ENCODE measurements at regions of chr2 and their contacts with region 1.

Region 1: DNA sequence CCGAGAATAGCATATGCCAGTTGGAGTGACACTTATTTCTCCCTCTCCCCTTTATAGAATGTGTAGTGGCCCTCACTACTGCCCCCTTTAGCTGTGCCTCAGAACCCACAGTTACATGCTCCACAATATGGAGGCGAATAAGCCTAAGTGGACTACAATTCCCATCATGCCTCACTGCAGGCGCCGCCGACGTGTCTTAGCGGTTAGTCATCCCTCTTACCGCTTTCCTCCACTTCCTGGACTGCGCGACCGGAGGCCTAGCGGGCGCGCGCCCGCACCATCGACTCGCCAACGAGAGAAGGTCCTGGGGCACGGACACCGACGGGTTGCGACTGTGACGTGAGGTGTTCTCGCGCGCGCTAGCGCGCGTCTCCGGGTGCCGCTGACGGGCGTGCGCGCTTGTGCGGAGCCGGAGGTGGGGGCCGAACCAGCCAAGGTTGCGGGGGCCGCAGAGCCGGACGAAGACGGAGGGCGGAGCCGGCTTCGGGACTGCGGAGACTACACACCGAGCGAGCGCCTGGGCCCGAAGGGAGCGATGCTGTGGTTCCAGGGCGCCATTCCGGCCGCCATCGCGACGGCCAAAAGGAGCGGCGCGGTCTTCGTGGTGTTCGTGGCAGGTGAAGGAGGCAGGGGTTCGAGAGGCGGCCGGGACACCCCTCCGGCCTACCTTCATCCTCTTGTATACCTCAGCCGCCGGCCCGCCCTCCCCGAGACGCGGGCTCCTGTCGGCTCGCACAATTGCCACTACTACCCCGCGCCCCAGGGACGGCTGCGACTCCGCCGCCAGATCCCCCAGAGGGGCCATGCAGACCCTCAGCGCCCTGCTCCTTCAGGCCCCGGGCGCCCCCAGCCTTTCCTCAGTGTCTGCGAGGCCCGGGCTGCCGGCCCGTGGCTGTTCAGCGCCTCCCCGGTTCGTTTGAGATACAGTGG is at the start of gene UBXN4:
- DNase-seq: peak; percentile 86 to 97 (median 90)
- H3K4me3 ChIP-seq: peak within 1 kb of the TSS; percentile 87
- H3K4me3 Mint-ChIP-seq: peak within 1 kb of the TSS; percentile 92 to 98 (median 97)
- H3K27ac ChIP-seq: peak within 1 kb of the TSS; percentile 94
- H3K27ac Mint-ChIP-seq: peak within 1 kb of the TSS; percentile 93 to 100 (median 99)
- H3K4me1 ChIP-seq: peaks cover 39% of the 10 kb centered on the region
- H3K4me1 Mint-ChIP-seq: peaks cover 38 to 46% (median 46%) of the 10 kb centered on the region in 3 donors
- H3K27me3 ChIP-seq: no peaks in the 10 kb centered on the region
- H3K27me3 Mint-ChIP-seq: no peaks in the 10 kb centered on the region
- total RNA-seq, gene UBXN4: 85.5 to 96.9 TPM

Region 2: GRCh38 chr2:135531231-135532228 is 210.1 kb before region 1 on chr2 and contains the start of gene R3HDM1:
- CTCF ChIA-PET with region 1: interaction called, 3 read pairs
- POLR2A ChIA-PET with region 1: interaction called, 12 read pairs
- DNase-seq: peak; percentile 89 to 98 (median 97)
- H3K4me3 ChIP-seq: peak within 1 kb of the TSS; percentile 98
- H3K4me3 Mint-ChIP-seq: no peak within 1 kb of the TSS
- H3K27ac ChIP-seq: peak within 1 kb of the TSS; percentile 97
- H3K27ac Mint-ChIP-seq: peak within 1 kb of the TSS in 6 of 8 donors; percentile 36 to 92 (median 75)
- H3K4me1 ChIP-seq: peaks cover 7% of the 10 kb centered on the region
- H3K4me1 Mint-ChIP-seq: peaks cover 22 to 38% (median 37%) of the 10 kb centered on the region in 3 donors
- H3K27me3 ChIP-seq: no peaks in the 10 kb centered on the region
- H3K27me3 Mint-ChIP-seq: no peaks in the 10 kb centered on the region
- total RNA-seq, gene R3HDM1: 49.7 to 52.6 TPM

Region 3: GRCh38 chr2:136058262-136058661 is 316.6 kb after region 1 on chr2:
- CTCF ChIA-PET with region 1: no interaction called
- POLR2A ChIA-PET with region 1: interaction called, 11 read pairs
- DNase-seq: no peak
- H3K4me3 ChIP-seq: no peak overlapping the region
- H3K4me3 Mint-ChIP-seq: peak overlapping the region in 2 of 7 donors; percentile 1 to 7
- H3K27ac ChIP-seq: no peak overlapping the region
- H3K27ac Mint-ChIP-seq: peak overlapping the region in 4 of 8 donors; percentile 28 to 56 (median 45)
- H3K4me1 ChIP-seq: peaks cover 61% of the 10 kb centered on the region
- H3K4me1 Mint-ChIP-seq: peaks cover 39 to 81% (median 68%) of the 10 kb centered on the region in 3 donors
- H3K27me3 ChIP-seq: no peaks in the 10 kb centered on the region
- H3K27me3 Mint-ChIP-seq: peaks cover 0 to 1% of the 10 kb centered on the region in 2 donors

Measured in CD8-positive, alpha-beta memory T cell (primary cell).